ENCODE measurements at regions of chr3 and their contacts with region 1.

Region 1: DNA sequence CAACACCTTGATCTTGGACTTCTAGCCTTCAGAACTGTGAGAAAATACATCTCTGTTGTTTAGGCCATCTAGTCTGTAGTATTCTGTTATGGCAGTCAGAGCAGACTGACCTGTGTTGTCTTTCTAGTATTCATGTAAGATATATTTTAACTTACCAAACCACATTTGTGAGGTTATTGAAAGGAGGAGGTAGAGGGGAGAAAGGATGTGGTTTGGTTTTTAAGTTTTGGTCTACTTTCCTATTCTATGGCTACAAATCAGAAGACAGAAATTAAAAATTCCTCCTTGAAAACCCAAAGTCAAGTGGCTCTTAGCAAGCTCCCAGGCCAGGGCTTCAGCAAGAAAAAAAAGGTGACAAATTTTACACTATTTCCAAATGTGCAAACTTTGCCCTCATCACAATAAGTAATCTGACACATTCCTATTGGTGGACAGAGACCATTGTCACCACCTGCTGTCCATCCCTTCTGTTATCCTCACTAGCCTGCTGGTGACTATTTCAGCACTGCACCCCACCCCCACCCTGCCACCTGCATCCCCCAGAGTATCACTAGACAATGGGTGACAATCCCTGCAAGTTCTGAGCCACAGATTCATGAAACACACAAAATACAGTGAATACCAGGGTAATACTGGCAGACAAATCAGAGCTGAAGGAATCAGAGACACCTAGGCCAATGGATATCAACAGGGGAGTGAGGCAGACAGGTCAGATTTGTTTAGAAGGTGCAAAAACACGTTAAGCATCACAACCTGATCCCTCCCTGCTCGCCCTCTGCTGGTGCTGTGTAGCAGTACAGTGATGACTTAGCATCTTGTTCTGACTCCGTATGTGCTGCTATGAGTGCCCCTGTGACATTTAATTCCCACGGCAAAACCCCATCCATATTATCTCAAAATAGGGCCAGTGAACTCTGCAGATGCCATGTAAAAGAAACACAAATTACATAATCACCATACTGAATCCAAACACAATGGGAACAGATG is 79.0 kb upstream of the DCLK3 start:
- DNase-seq: peak; percentile 2
- ATAC-seq: no peak
- H3K4me3 ChIP-seq: no peak overlapping the region
- H3K27ac ChIP-seq: no peak overlapping the region
- H3K4me1 ChIP-seq: no peaks in the 10 kb centered on the region
- H3K27me3 ChIP-seq: no peaks in the 10 kb centered on the region
- CTCF ChIP-seq: peak; percentile 51

Region 2: GRCh38 chr3:36147934-36148333 is 695.4 kb before region 1 on chr3:
- CTCF ChIA-PET with region 1: interaction called, 13 read pairs
- POLR2A ChIA-PET with region 1: no interaction called
- in situ Hi-C with region 1: no loop called
- intact Hi-C with region 1: no loop called
- DNase-seq: no peak
- ATAC-seq: no peak
- H3K4me3 ChIP-seq: no peak overlapping the region
- H3K27ac ChIP-seq: no peak overlapping the region
- H3K4me1 ChIP-seq: no peaks in the 10 kb centered on the region
- H3K27me3 ChIP-seq: no peaks in the 10 kb centered on the region
- CTCF ChIP-seq: no peak